ENCODE measurements at regions of chr5 and their contacts with region 1.

Region 1: DNA sequence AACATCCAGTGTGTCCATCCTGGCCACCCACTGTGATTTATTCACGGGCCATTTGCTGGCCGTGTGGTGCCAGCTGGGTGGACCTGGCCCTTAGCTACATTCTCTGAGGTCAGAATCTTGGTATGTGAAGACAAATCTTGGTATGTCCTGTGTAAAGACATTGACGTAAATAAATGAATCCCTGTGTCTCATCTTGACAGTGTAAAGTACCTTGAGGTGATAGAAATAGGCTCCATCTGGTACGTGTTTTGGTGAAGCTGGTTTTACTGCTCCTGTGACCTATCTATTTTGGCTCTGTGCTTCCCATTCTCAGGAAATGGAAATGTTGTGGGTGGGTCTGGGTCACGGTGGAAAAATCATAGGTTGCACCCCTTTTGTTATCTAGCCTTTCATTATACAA is 245.4 kb upstream of the ANKH start:
- DNase-seq: no peak
- ATAC-seq: no peak
- H3K4me3 Mint-ChIP-seq: no peak overlapping the region
- H3K27ac Mint-ChIP-seq: no peak overlapping the region
- H3K4me1 Mint-ChIP-seq: no peaks in the 10 kb centered on the region
- H3K27me3 Mint-ChIP-seq: no peaks in the 10 kb centered on the region
- CTCF ChIP-seq: no peak

Region 2: DNA sequence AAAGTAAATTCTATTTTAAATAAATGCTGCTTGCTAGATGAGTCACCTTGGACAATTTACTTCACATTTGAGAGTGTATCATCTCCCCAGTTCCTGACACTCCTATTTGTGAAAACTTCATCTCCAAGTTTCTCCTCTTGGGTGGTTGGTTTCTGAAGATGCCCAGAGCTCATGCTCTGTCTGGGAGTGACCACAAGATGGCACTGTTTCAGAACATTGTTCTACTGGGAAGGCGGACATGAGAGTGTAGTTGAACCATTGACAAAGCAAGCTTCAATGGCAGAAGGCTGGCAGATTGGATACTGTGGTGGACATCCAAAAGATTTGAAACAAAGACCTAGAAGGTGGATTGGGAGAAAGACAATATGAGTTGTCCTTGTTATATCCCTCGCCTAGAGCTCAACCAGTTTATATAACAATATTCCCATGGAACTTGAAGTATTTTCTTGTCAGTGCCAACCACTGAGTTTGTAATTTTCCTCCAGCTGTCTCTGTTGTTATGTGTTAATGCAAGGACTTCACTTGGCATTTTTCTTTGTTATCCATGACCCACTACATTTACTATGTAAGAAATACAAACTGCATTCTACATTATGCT is 11.1 kb before region 1 on chr5:
- CTCF ChIA-PET with region 1: interaction called, 18 read pairs
- POLR2A ChIA-PET with region 1: no interaction called
- intact Hi-C with region 1: no loop called
- DNase-seq: peak; percentile 45
- ATAC-seq: peak; percentile 61
- H3K4me3 Mint-ChIP-seq: no peak overlapping the region
- H3K27ac Mint-ChIP-seq: no peak overlapping the region
- H3K4me1 Mint-ChIP-seq: no peaks in the 10 kb centered on the region
- H3K27me3 Mint-ChIP-seq: no peaks in the 10 kb centered on the region
- CTCF ChIP-seq: peak; percentile 82

Region 3: GRCh38 chr5:15267966-15268365 is 151.0 kb after region 1 on chr5:
- CTCF ChIA-PET with region 1: no interaction called
- POLR2A ChIA-PET with region 1: no interaction called
- intact Hi-C with region 1: no loop called
- DNase-seq: no peak
- ATAC-seq: no peak
- H3K4me3 Mint-ChIP-seq: no peak overlapping the region
- H3K27ac Mint-ChIP-seq: no peak overlapping the region
- H3K4me1 Mint-ChIP-seq: no peaks in the 10 kb centered on the region
- H3K27me3 Mint-ChIP-seq: no peaks in the 10 kb centered on the region
- CTCF ChIP-seq: no peak

Region 4: DNA sequence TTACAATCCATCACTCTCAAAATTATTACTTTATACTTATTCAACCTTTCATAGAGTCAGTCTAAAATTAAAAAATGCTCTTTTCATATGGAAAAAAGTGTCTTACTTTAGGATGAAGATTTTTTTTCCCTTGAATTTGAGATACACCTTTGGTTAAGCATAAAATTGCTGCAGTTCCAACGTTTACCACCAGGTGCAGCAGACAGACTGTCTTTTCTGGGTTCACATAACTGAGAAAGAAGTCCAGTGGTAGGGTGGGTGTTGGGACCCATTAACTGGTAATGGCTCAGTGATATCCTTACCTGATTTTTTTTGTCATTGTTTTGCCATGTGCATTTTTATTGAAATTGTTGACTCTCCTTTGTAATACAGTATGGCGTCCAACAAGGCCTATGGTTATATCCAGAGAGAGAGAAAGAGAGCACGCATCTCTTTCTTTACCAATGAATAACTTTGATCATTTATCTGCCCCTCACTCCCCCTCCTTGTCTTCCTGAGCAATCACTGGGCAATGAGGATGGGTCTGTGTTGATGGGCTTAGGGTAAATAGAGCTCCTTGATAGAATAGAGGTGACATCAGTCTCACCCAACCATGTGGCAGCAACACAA is 481.4 kb after region 1 on chr5:
- CTCF ChIA-PET with region 1: no interaction called
- POLR2A ChIA-PET with region 1: no interaction called
- intact Hi-C with region 1: loop called (anchors 10 kb)
- DNase-seq: peak; percentile 10
- ATAC-seq: no peak
- H3K4me3 Mint-ChIP-seq: no peak overlapping the region
- H3K27ac Mint-ChIP-seq: no peak overlapping the region
- H3K4me1 Mint-ChIP-seq: no peaks in the 10 kb centered on the region
- H3K27me3 Mint-ChIP-seq: no peaks in the 10 kb centered on the region
- CTCF ChIP-seq: peak; percentile 55

Measured in activated CD8-positive, alpha-beta T cell treated with anti-CD3 and anti-CD28 coated beads for 36 hours (primary cell).